CD8-positive, alpha-beta T cell (primary cell): ENCODE measurements at regions of chr5 and their contacts with region 1.

Region 1: GRCh38 chr5:151051066-151051930 is 29.5 kb downstream of the TNIP1 start:
- DNase-seq: peak; percentile 50 to 84 (median 76)
- ATAC-seq: peak; percentile 75
- H3K4me3 ChIP-seq: no peak overlapping the region
- H3K4me3 Mint-ChIP-seq: no peak overlapping the region
- H3K27ac ChIP-seq: no peak overlapping the region
- H3K27ac Mint-ChIP-seq: peak overlapping the region; percentile 22
- H3K4me1 ChIP-seq: peaks cover 4% of the 10 kb centered on the region
- H3K4me1 Mint-ChIP-seq: peaks cover 11% of the 10 kb centered on the region
- H3K27me3 ChIP-seq: no peaks in the 10 kb centered on the region
- H3K27me3 Mint-ChIP-seq: no peaks in the 10 kb centered on the region
- CTCF ChIP-seq: peak; percentile 72

Region 2: GRCh38 chr5:150801117-150801927 is 250.0 kb before region 1 on chr5:
- CTCF ChIA-PET with region 1: interaction called, 4 read pairs
- POLR2A ChIA-PET with region 1: no interaction called
- intact Hi-C with region 1: loop called in 1 of 2 experiments (anchors 10 kb)
- DNase-seq: peak in 2 of 9 experiments; percentile 62 to 71
- ATAC-seq: peak; percentile 54
- H3K4me3 ChIP-seq: no peak overlapping the region
- H3K4me3 Mint-ChIP-seq: no peak overlapping the region
- H3K27ac ChIP-seq: no peak overlapping the region
- H3K27ac Mint-ChIP-seq: no peak overlapping the region
- H3K4me1 ChIP-seq: peaks cover 5% of the 10 kb centered on the region
- H3K4me1 Mint-ChIP-seq: peaks cover 4% of the 10 kb centered on the region
- H3K27me3 ChIP-seq: no peaks in the 10 kb centered on the region
- H3K27me3 Mint-ChIP-seq: peaks cover 4% of the 10 kb centered on the region
- CTCF ChIP-seq: peak; percentile 78

Region 3: GRCh38 chr5:151075698-151076331 is 24.5 kb after region 1 on chr5:
- CTCF ChIA-PET with region 1: interaction called, 33 read pairs
- POLR2A ChIA-PET with region 1: interaction called, 3 read pairs
- intact Hi-C with region 1: loop called in 1 of 2 experiments (anchors 2 kb)
- DNase-seq: no peak
- ATAC-seq: no peak
- H3K4me3 ChIP-seq: no peak overlapping the region
- H3K4me3 Mint-ChIP-seq: no peak overlapping the region
- H3K27ac ChIP-seq: no peak overlapping the region
- H3K27ac Mint-ChIP-seq: peak overlapping the region; percentile 66
- H3K4me1 ChIP-seq: peaks cover 50% of the 10 kb centered on the region
- H3K4me1 Mint-ChIP-seq: peaks cover 74% of the 10 kb centered on the region
- H3K27me3 ChIP-seq: no peaks in the 10 kb centered on the region
- H3K27me3 Mint-ChIP-seq: no peaks in the 10 kb centered on the region
- CTCF ChIP-seq: no peak

Region 4: DNA sequence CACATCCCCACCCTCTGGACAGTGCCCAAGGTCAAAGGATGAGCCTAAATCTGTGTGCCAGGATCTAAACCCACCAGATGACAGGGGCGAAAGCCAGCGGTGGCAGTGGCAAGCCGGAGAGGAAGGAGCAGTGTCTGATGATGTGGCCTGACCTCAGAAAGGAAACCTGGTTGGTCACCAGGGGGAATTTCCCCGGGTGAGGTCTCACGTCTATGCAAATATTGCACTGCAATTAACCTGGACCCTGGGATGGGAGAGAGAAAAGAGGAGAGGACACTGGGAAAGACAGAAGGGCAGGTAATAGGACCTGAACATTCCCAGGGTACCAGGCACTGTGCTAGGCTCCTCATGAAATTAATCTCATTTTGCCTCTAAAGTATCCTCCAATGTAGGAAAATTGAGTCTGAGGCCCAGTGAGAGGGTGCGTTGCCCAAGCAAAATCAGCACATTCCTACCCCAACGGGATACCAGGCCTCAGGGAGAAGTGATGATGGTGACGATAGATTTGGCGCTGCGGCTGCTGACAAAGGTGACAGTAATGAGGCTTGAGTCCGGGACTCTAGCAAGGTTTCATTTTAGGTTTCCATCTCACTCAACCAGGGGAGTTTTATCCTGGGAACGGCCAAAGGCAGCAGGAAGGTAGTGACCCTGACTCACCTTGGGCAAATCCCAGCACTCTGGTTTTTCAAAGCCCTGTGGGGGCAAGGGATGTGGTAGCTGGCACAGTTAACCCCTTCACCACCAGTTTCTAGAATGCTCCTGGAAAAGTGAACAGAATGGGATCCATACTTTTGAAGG is 43.0 kb after region 1 on chr5:
- CTCF ChIA-PET with region 1: interaction called, 19 read pairs
- POLR2A ChIA-PET with region 1: interaction called, 3 read pairs
- intact Hi-C with region 1: no loop called
- DNase-seq: peak in 7 of 9 experiments; percentile 27 to 86 (median 53)
- ATAC-seq: peak; percentile 50
- H3K4me3 ChIP-seq: peak overlapping the region in 1 of 2 experiments; percentile 18
- H3K4me3 Mint-ChIP-seq: peak overlapping the region; percentile 52
- H3K27ac ChIP-seq: peak overlapping the region in 1 of 2 experiments; percentile 73
- H3K27ac Mint-ChIP-seq: peak overlapping the region; percentile 89
- H3K4me1 ChIP-seq: peaks cover 53% of the 10 kb centered on the region
- H3K4me1 Mint-ChIP-seq: peaks cover 70% of the 10 kb centered on the region
- H3K27me3 ChIP-seq: no peaks in the 10 kb centered on the region
- H3K27me3 Mint-ChIP-seq: no peaks in the 10 kb centered on the region
- CTCF ChIP-seq: no peak

Region 5: GRCh38 chr5:151164686-151165392 is 113.5 kb after region 1 on chr5:
- CTCF ChIA-PET with region 1: interaction called, 114 read pairs
- POLR2A ChIA-PET with region 1: interaction called, 3 read pairs
- intact Hi-C with region 1: loop called (anchors 1 kb)
- DNase-seq: peak; percentile 62 to 90 (median 81)
- ATAC-seq: peak; percentile 96
- H3K4me3 ChIP-seq: no peak overlapping the region
- H3K4me3 Mint-ChIP-seq: no peak overlapping the region
- H3K27ac ChIP-seq: no peak overlapping the region
- H3K27ac Mint-ChIP-seq: no peak overlapping the region
- H3K4me1 ChIP-seq: peaks cover 10% of the 10 kb centered on the region
- H3K4me1 Mint-ChIP-seq: peaks cover 30% of the 10 kb centered on the region
- H3K27me3 ChIP-seq: no peaks in the 10 kb centered on the region
- H3K27me3 Mint-ChIP-seq: no peaks in the 10 kb centered on the region
- CTCF ChIP-seq: peak; percentile 92